ENCODE measurements at regions of chr13 and their contacts with region 1.

Region 1: DNA sequence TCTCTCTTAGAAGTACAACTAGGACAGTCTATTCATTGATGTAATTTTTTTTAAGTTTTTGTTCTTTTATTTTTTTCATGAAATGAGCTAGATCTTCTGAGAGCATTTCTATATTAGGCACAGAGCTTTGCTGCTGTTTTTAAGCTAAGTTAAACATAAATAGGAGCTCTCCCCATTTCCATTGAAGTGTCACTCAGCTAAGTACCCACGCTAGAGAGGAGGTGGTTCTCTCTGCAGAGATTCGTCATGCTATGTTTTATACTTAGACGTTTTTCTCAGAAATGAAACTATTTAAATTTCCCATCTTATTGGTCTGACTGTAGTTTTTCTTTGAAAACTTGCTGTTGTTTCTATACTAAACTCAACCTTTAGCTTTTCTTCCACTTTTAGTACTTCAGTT is 271.5 kb downstream of the PCDH9 start:
- DNase-seq: no peak
- H3K4me3 ChIP-seq: no peak overlapping the region
- H3K27ac ChIP-seq: no peak overlapping the region
- H3K4me1 ChIP-seq: no peaks in the 10 kb centered on the region
- CTCF ChIP-seq: no peak

Region 2: DNA sequence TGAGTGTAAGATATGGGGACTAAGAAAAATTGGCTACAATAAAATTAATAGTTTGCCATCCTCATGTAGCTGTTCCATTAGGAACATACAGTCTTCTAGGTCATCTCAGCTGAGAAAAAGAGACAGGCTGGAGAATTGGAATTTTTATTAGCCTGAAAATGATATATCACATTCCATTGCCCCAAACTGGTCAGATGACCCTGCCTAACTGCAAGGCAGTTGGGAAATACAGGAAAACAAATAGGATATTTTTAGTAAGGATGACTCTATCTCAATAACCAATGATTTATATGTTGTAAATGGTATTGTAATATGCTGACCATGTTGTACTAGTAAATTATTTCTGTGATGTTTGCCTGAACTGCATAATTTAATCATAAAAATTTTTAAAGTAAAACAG is 402.3 kb before region 1 on chr13:
- CTCF ChIA-PET with region 1: no interaction called
- POLR2A ChIA-PET with region 1: no interaction called
- intact Hi-C with region 1: no loop called
- DNase-seq: no peak
- H3K4me3 ChIP-seq: no peak overlapping the region
- H3K27ac ChIP-seq: no peak overlapping the region
- H3K4me1 ChIP-seq: peaks cover 11% of the 10 kb centered on the region
- CTCF ChIP-seq: no peak

Region 3: DNA sequence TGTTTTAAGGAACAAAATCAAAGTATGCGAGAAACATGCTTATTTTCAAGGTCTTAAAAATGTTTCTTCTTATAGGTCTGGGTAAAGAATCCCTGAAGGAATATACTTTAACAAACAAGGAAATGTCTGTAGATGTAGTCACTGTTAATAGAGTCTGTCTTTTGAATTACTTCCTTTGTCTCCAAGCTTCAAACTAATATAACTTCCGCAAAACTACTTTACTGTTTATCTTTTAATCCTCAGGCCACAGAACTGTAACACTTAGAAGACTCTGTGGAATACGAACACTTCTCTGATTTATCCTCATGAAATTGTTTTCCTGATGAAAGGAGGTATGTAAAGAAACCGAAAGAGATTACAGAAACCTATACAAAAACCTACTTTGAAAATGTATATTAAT is 44.5 kb before region 1 on chr13:
- CTCF ChIA-PET with region 1: no interaction called
- POLR2A ChIA-PET with region 1: no interaction called
- intact Hi-C with region 1: no loop called
- DNase-seq: no peak
- H3K4me3 ChIP-seq: no peak overlapping the region
- H3K27ac ChIP-seq: no peak overlapping the region
- H3K4me1 ChIP-seq: peaks cover 8% of the 10 kb centered on the region
- CTCF ChIP-seq: no peak

Region 4: DNA sequence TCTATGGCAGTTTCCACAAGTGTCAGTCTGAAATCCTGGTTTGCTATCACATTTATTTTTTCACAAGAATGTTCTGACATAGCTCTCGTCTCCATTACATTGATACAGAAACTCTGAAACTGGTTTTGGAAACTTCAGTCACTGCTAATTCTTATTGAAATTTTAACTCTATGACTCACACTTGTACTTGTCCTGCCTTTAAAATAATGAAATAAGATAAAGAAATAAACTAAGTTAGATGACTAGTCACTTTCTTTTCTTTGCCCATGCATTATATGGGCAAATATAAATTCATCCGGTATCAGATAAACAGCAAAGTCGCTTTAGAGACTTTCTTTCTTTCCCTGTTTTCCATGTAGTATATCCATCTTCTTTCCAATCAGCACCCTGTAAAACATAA is 14.0 kb after region 1 on chr13:
- CTCF ChIA-PET with region 1: no interaction called
- POLR2A ChIA-PET with region 1: interaction called, 30 read pairs
- intact Hi-C with region 1: no loop called
- DNase-seq: no peak
- H3K4me3 ChIP-seq: no peak overlapping the region
- H3K27ac ChIP-seq: no peak overlapping the region
- H3K4me1 ChIP-seq: peaks cover 13% of the 10 kb centered on the region
- CTCF ChIP-seq: no peak

Region 5: GRCh38 chr13:67101730-67102467 is 143.3 kb after region 1 on chr13:
- CTCF ChIA-PET with region 1: no interaction called
- POLR2A ChIA-PET with region 1: no interaction called
- intact Hi-C with region 1: no loop called
- DNase-seq: no peak
- H3K4me3 ChIP-seq: no peak overlapping the region
- H3K27ac ChIP-seq: no peak overlapping the region
- H3K4me1 ChIP-seq: peaks cover 4% of the 10 kb centered on the region
- CTCF ChIP-seq: no peak